ENCODE measurements at regions of chr19 and their contacts with region 1.

Region 1: DNA sequence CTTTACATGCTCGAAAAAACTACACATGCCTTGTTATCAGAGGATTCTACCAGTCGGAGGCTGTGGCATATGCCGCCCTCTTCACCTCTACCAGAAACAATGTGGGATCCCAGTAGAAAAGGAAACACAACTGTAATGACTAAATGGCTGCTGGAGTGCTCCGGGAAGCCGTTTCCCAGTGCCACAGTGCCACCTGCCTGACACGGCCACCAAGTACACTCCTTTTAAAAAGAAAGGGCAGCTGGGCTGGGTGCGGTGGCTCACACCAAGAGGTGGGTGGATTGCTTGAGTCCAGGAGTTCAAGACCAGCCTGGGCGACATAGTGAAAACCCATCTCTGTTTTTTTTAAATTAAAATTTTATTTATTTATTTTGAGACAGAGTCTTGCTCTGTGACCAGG is 67.3 kb downstream of the TRPM4 start:
- DNase-seq: peak in 1 of 2 donors; percentile 56
- ATAC-seq: no peak
- H3K4me3 ChIP-seq: no peak overlapping the region
- H3K27ac ChIP-seq: no peak overlapping the region
- H3K4me1 ChIP-seq: no peaks in the 10 kb centered on the region
- H3K27me3 ChIP-seq: no peaks in the 10 kb centered on the region

Region 2: GRCh38 chr19:48006762-48007161 is 1218.1 kb before region 1 on chr19:
- intact Hi-C with region 1: no loop called
- DNase-seq: no peak
- ATAC-seq: no peak
- H3K4me3 ChIP-seq: no peak overlapping the region
- H3K27ac ChIP-seq: no peak overlapping the region
- H3K4me1 ChIP-seq: no peaks in the 10 kb centered on the region
- H3K27me3 ChIP-seq: no peaks in the 10 kb centered on the region

Region 3: GRCh38 chr19:49243129-49243528 is 18.3 kb after region 1 on chr19:
- intact Hi-C with region 1: no loop called
- DNase-seq: no peak
- ATAC-seq: no peak
- H3K4me3 ChIP-seq: no peak overlapping the region
- H3K27ac ChIP-seq: no peak overlapping the region
- H3K4me1 ChIP-seq: no peaks in the 10 kb centered on the region
- H3K27me3 ChIP-seq: no peaks in the 10 kb centered on the region

Region 4: DNA sequence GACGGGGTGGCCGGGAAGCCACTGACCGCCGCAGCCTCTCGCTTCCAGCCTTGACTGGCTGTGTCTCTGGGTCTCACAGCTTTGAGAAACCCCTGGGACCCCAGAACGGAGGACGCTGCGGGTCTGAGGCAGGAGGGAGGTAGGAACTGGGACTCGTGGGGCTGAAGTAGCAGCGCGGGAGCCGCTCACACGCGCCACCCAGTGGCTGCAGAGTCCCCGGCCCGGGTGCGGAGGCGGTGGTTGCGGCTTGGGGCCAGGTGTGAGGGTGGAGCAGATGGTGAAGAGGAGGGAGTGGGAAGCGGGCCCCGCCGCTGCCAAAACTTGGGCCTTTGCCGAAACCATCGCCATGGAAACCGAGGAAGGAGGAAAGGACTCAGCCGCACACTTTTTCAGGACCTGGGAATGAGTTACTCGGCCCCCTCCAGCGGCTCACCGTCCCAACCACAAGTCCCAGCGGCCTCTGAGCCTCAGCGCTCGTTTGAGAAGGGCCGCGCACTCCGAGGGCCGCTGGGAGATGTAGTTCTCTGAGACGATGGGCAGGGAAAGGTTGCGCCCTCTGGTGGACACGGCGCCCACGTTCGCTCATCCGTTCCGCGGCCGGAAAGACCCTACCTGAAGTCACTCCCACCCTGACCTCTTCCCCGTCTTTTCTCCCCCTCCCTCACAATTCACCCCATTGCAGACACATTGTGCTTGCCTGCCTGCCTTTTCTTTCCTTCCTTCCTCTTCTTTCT is 218.7 kb after region 1 on chr19:
- intact Hi-C with region 1: loop called (anchors 5 kb)
- DNase-seq: peak; percentile 97 to 98
- ATAC-seq: peak; percentile 94
- H3K4me3 ChIP-seq: peak overlapping the region; percentile 15 to 42
- H3K27ac ChIP-seq: peak overlapping the region in 1 of 2 donors; percentile 11
- H3K4me1 ChIP-seq: no peaks in the 10 kb centered on the region
- H3K27me3 ChIP-seq: no peaks in the 10 kb centered on the region

Measured in aorta (tissue), 5 donors.